ENCODE measurements at regions of chr5 and their contacts with region 1.

Region 1: DNA sequence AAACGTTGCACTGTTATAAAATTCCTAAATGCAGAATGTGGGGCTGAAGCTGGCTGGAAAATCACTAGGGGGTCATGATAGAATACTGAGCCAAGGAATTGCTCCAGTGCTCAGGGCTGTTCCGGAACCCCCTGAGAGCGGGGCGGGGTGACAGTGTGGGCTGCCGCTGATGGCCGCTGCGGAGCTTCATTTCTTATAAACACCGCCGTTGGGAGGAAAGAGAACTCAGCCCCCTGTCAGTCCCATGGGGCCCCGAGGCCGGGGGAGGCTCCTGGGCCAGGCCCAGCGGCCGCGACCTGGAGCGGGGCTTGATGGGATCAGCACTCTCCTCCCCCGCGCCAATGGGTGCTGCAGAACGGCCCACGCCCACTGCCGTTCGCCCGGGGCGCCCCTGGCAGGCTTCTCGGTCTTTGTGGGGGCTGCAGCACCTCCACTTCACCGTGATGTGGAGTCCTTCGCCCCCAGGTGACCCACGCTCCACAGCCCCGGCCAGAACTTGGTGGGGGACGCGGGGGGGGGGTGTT is 5.2 kb upstream of the IRF1 start:
- DNase-seq: peak; percentile 91
- ATAC-seq: peak; percentile 55
- H3K4me3 Mint-ChIP-seq: peak overlapping the region; percentile 87
- H3K27ac Mint-ChIP-seq: peak overlapping the region; percentile 92
- H3K4me1 Mint-ChIP-seq: peaks cover 74% of the 10 kb centered on the region
- H3K27me3 Mint-ChIP-seq: no peaks in the 10 kb centered on the region

Region 2: GRCh38 chr5:132150565-132150964 is 345.2 kb before region 1 on chr5:
- CTCF ChIA-PET with region 1: no interaction called
- DNase-seq: no peak
- ATAC-seq: no peak
- H3K4me3 Mint-ChIP-seq: no peak overlapping the region
- H3K27ac Mint-ChIP-seq: no peak overlapping the region
- H3K4me1 Mint-ChIP-seq: no peaks in the 10 kb centered on the region
- H3K27me3 Mint-ChIP-seq: peaks cover 7% of the 10 kb centered on the region

Region 3: DNA sequence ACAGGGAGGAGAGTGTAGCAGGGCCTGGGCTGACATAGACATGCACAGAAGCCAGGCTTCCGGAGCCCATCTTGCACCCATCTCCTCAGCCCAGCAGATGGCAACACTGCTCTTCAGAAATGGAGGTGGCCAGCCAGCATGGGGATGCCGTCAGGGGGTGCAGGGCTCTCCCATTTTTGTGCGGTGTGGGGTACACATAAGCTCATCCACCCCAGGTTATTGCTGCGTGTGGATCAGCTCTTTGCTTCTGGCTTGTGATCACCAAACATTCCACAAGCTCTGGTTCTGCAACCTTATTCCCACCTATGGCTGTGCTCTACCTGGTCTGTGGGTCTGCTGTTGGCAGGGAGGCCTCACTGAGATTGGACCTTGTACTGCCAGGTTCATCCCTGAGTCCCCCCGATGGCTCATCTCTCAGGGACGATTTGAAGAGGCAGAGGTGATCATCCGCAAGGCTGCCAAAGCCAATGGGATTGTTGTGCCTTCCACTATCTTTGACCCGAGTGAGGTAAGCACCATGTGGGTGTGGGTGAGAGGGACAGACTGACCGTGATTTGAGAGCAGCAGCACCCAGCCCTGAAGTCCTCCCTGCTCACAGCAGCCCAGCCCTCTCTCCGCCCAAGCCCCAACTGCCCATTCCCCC is 109.0 kb before region 1 on chr5:
- CTCF ChIA-PET with region 1: interaction called, 328 read pairs
- DNase-seq: peak; percentile 88
- ATAC-seq: peak; percentile 96
- H3K4me3 Mint-ChIP-seq: no peak overlapping the region
- H3K27ac Mint-ChIP-seq: peak overlapping the region; percentile 69
- H3K4me1 Mint-ChIP-seq: peaks cover 50% of the 10 kb centered on the region
- H3K27me3 Mint-ChIP-seq: no peaks in the 10 kb centered on the region

Region 4: GRCh38 chr5:132410451-132411381 is 85.0 kb before region 1 on chr5:
- CTCF ChIA-PET with region 1: interaction called, 32 read pairs
- DNase-seq: peak; percentile 91
- ATAC-seq: peak; percentile 79
- H3K4me3 Mint-ChIP-seq: peak overlapping the region; percentile 97
- H3K27ac Mint-ChIP-seq: peak overlapping the region; percentile 99
- H3K4me1 Mint-ChIP-seq: peaks cover 58% of the 10 kb centered on the region
- H3K27me3 Mint-ChIP-seq: no peaks in the 10 kb centered on the region

Region 5: DNA sequence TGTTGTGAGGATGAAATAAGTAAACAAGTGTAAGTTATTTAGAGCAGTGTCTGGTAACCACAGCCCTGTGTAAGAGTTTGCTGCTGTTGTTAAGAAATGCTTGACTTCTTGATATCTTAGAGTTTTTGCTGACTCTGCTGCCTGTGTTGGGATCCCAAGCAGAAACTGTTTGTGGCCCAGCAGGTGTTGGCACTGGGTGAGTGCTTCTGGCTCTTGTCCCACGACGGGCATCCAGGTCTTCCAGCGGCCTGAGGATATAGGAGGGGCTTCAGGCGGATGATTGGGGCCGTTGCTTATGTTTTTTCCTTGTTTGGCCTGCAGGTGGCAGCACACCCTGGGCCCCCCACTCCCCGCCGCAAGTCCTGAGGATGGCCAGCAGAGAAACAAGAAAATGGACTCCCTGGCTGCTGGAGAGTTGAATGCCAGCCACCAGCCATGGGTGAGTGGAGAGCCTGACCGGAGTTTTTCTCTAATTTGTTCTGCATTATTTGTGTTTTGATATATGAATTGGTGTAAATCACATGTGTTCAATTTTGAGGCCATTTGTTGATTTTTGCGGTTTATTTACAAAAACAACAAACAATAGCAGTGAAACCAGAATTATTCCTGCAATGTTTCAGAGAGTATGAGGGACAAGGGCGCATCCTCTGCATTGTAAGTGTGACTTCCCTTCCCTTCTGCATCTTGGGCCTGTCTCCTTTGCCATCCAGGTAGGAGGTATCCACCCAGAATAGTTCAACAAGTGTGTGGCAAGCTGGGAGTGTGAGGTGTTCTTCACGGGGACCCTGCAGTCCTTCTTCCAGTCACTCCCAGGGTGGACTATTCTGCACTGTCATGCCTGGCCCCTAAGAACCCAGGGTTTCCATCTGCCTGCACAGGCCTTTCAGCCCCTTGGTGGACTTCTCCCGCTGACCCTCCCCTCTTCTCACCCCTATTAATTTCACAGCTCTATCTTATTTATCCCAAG is 75.9 kb before region 1 on chr5:
- CTCF ChIA-PET with region 1: interaction called, 85 read pairs
- DNase-seq: peak; percentile 79
- ATAC-seq: peak; percentile 75
- H3K4me3 Mint-ChIP-seq: peak overlapping the region; percentile 55
- H3K27ac Mint-ChIP-seq: peak overlapping the region; percentile 98
- H3K4me1 Mint-ChIP-seq: peaks cover 96% of the 10 kb centered on the region
- H3K27me3 Mint-ChIP-seq: no peaks in the 10 kb centered on the region

Region 6: DNA sequence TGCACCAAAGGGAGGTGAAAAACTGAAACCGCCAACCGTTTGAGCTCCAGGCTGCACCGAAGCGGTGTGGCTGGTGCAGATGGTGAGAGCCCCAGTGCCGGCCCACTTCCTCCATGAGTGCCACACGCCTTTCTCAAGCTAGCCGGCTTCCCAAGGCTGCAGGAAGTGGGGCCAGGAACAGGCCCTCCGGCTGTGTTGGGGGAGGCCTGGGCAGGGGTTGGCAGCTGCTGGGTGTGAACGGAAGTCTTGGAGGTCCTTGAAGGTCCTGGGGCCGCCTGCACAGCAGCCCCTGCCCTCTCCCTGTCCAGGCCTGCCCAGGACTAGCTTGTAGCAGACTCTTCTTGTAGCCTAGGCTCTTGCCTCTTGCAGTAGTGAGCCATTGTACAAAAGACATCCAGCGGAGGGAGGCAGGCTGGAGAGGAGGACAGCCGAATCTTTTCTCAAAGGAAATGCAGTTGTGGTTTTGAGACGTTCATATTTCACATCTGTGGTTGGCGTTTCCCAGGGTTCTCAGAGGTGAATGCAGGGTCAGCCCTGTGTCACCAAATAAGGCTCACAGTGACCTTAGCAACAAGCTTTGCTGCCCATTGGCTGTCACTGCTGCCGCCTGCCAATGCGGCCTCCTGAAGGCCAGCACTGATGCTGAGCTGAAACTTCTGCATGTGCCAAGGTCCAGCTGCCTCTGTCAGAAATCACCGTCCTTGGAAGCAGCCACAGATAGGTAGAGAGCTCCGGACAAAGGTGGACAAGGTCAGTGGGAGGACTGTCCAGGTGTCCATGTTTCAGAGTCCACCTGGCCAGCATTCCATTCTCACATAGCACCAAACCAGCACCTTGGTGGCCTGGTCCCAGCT is 29.1 kb before region 1 on chr5:
- CTCF ChIA-PET with region 1: interaction called, 57 read pairs
- DNase-seq: peak; percentile 93
- ATAC-seq: peak; percentile 77
- H3K4me3 Mint-ChIP-seq: peak overlapping the region; percentile 59
- H3K27ac Mint-ChIP-seq: peak overlapping the region; percentile 86
- H3K4me1 Mint-ChIP-seq: peaks cover 98% of the 10 kb centered on the region
- H3K27me3 Mint-ChIP-seq: no peaks in the 10 kb centered on the region

Region 7: DNA sequence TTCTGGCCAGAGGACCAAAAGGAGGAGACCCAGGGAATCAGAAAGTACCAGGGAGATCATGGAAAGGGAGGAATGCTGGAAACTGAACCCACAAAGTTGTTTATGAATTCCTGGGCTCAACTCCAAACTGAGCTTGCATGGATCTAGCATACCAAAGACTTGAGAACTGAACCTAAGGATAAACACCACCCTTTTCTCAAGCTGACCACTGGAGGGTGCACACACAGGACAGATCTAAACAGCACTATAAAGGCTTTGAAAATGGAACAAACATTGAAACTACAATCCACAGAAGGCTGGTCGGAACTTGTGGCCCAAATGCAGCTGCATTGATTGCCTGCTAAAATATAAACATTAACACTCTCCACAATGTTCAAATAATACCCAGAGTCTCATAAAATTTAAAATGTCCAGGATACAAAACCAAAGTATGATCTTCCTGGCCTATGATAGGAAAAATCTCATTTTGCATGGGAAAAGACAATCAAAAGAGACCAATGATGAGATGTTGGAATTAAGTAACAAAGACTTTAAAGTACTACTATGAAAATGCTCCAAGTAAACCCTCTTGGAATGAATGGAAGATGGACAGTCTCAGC is 10.5 kb after region 1 on chr5:
- CTCF ChIA-PET with region 1: interaction called, 18 read pairs
- DNase-seq: no peak
- ATAC-seq: peak; percentile 62
- H3K4me3 Mint-ChIP-seq: no peak overlapping the region
- H3K27ac Mint-ChIP-seq: no peak overlapping the region
- H3K4me1 Mint-ChIP-seq: peaks cover 11% of the 10 kb centered on the region
- H3K27me3 Mint-ChIP-seq: peaks cover 13% of the 10 kb centered on the region

Region 8: DNA sequence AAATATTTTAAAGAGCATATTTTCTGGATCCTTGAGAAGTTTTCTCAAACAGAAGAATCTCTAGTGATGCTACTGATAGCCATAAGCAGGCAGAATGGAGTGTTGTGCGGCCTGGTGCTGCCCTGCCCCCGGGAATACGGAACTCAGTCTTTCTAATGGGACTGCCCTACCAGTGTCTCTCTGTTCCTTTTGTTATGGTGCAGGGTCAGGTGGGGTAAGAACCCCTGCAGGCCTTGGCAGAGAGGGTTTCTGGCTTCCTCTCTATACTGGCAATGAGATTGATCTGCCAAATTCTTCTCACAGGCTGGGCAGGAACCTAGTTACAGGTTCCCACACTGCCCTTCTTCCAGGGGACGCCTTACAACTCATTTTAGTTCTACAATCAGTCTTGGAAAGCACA is 45.0 kb after region 1 on chr5:
- CTCF ChIA-PET with region 1: no interaction called
- DNase-seq: no peak
- ATAC-seq: no peak
- H3K4me3 Mint-ChIP-seq: no peak overlapping the region
- H3K27ac Mint-ChIP-seq: no peak overlapping the region
- H3K4me1 Mint-ChIP-seq: peaks cover 26% of the 10 kb centered on the region
- H3K27me3 Mint-ChIP-seq: no peaks in the 10 kb centered on the region

Region 9: GRCh38 chr5:132759114-132760048 is 263.7 kb after region 1 on chr5:
- CTCF ChIA-PET with region 1: no interaction called
- DNase-seq: no peak
- ATAC-seq: no peak
- H3K4me3 Mint-ChIP-seq: no peak overlapping the region
- H3K27ac Mint-ChIP-seq: no peak overlapping the region
- H3K4me1 Mint-ChIP-seq: peaks cover 10% of the 10 kb centered on the region
- H3K27me3 Mint-ChIP-seq: no peaks in the 10 kb centered on the region

Measured in activated CD8-positive, alpha-beta memory T cell treated with anti-CD3 and anti-CD28 coated beads, Interleukin-2, amount 10 ng/mL, durations not matched to agents 7 days and 5 days (primary cell).